AG04449 (cell line): ENCODE measurements at regions of chr19 and their contacts with region 1.

Region 1: DNA sequence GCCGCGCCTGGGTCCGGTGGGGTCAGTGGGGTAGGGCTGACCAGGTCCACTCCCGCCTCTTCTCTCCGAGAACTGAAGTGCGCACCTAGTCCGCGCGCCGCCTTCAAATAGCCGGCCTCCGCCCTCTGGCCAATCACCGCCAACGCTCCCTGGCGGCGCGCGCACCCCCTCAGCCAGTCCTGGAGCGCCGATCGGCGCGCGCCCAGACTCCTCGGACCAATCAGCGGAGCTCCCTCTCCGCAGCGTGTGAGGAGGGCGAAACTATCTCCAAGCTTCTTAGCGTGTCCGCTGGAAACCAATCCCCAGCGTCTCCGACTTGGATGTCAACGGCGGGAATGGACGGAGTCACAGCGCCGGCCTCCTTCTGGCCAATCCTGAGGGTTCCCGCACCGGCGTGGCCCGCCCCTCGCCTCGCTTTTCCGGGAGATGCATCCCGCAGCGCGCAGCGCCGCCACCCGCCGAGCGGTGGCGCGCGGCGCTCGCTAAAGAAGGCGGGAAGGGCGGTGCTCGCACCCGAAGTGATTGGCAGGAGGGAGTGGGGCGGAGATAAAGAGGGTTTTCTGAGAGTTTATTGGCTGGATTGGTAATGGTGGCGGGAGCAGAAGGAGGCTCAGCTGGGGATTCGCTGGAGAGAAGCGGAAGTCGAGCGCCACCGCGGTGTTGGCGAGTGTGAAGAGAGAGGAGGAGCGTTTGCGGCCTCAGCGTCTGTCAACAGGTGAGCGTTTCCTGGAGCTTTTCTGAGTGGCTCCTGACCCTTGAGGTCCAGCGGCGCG is at the start of gene ASF1B:
- DNase-seq: peak; percentile 99
- H3K4me3 ChIP-seq: peak within 1 kb of the TSS; percentile 84
- CTCF ChIP-seq: peak; percentile 65

Region 2: DNA sequence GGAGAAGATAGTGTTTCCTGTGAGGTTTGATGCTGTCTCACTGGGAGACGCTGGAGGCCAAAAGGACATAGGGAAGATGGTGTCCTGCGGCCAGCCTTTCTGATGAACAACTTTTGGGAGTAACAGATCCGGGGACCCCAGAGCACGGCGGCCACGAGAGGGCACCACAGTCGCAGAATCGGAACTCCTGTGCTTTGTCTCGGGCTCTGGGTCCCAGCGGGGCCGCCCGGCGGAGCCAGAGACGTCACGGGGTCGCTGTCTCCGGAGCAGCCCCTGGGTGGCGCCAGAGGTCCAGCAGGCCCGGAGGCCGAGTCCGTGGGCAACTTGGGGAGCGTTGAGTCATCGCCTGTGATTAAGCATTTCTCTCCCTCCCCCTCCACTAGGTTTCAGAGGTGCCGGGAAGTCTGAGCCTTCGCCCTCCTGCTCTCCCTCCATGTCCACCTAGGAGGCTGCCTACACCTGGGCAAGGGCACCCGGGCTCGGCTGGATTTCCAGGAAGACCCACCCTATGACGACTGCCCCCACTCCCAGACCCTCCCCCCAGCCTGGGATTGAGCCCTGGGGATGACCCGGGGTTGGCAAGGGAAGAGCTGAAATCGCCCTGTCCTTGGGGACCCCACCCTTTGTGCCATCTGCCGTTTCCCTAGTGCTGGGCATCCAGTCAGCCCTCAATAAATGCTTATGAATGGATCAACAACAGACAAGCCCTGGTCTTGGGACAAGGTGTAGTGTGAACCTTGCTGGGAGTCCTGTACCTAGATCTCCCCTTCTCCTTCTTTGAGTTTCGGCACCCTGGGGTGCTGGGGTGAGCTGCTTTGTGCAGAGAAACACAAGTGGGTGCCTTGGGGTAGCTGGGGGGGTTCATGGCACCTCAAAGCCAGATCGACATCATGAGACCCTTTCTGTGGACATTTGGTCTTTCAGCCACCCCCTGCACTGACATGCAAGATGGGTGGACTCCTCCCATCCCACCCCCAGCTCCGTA is 256.3 kb before region 1 on chr19:
- CTCF ChIA-PET with region 1: interaction called, 13 read pairs
- POLR2A ChIA-PET with region 1: no interaction called
- DNase-seq: peak; percentile 51
- H3K4me3 ChIP-seq: peak overlapping the region; percentile 31
- CTCF ChIP-seq: peak; percentile 95

Region 3: GRCh38 chr19:14015524-14016035 is 121.1 kb before region 1 on chr19:
- CTCF ChIA-PET with region 1: no interaction called
- POLR2A ChIA-PET with region 1: no interaction called
- DNase-seq: no peak
- H3K4me3 ChIP-seq: no peak overlapping the region
- CTCF ChIP-seq: no peak

Region 4: DNA sequence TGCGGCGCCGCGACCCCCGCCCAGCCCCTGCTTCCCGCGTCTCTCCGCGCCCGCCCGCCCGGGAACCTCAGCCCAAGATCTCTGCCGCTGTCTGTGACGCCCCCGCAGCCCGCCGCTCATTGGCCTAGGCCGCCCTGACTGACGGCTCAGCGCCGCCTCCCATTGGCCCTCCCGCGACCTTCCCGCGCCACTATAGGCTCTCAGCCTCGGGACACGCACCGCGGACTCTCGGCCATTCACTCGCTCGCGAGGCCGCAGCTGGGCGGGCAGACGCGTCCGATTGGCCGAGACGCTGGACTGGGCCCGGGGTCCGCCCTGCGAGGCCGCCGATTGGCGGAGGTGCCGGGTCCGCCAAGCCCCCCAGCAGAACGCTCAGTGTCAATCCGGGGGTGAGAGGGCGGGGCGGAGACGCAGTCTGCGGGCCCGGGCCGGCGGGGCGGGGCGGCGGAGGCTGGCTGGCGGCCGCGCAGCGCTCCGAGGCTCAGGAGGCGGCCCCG is 19.0 kb before region 1 on chr19 and contains the start of gene PRKACA:
- CTCF ChIA-PET with region 1: interaction called, 45 read pairs
- POLR2A ChIA-PET with region 1: no interaction called
- DNase-seq: peak; percentile 84
- H3K4me3 ChIP-seq: peak within 1 kb of the TSS; percentile 76
- CTCF ChIP-seq: no peak

Region 5: DNA sequence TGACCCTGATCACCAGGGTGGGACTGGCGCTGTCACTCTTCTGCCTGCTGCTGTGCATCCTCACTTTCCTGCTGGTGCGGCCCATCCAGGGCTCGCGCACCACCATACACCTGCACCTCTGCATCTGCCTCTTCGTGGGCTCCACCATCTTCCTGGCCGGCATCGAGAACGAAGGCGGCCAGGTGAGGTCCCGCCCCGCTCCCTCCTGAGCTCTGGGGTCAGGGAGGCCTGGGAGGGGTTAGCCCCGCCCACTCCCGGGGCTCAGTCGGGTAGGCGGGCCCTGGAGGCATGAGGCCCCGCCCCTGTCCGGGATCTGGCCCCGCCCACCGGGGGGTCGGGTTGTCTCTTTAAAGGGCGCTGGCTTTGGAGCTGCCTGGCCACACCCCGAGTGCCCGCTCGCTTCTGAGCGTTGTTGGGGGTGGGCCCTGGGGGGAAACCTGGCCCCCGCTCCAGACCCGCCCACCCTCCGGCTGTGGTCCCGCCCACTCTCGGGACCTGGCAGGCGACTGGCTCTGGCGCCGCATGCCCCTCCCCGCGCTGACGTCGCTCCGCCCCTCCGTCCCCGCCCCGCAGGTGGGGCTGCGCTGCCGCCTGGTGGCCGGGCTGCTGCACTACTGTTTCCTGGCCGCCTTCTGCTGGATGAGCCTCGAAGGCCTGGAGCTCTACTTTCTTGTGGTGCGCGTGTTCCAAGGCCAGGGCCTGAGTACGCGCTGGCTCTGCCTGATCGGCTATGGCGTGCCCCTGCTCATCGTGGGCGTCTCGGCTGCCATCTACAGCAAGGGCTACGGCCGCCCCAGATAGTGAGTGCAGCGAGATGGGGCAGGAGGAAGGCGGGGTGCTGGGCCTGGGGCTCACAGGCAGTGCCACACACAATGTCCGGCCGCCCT is 269.3 kb after region 1 on chr19:
- CTCF ChIA-PET with region 1: interaction called, 21 read pairs
- POLR2A ChIA-PET with region 1: interaction called, 5 read pairs
- DNase-seq: no peak
- H3K4me3 ChIP-seq: no peak overlapping the region
- CTCF ChIP-seq: peak; percentile 85

Region 6: DNA sequence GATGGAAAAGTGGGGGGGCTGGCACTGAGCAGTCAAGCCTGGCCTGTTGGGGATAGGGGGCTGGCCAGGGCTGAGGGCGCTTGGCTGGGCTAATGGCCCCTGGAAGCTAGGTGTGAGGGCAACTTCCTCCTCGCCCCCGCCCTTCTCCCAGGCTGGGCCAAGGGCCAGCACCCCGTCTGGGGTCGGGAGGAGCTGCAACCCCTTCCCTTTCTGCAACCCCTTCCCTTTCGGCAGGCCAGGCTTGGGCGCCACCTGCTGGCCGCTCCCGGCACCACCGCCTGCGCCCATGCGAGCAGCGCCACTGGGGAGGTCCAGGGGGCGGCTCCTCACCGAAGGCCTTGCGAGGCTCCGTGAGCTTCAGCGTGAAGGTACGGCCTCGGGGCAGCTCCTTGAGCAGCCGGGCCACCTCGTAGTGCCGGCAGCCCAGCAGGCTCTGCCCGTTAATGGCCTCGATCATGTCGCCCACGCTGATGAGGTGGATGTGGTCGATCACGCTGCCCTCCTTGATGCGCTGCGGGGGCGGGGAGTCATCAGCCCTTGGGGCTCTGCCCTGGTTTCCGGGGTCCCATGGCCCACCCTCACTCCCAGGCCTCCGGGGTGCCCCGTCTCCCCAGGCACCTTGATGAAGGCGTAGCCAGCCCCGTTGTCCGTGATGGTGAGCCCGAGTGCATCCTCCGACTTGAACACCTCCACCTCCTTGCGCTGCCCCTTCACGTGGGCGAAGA is 343.4 kb after region 1 on chr19:
- CTCF ChIA-PET with region 1: interaction called, 19 read pairs
- POLR2A ChIA-PET with region 1: no interaction called
- DNase-seq: no peak
- H3K4me3 ChIP-seq: no peak overlapping the region
- CTCF ChIP-seq: peak; percentile 95